HEK293T (cell line): ENCODE measurements at regions of chr22 and their contacts with region 1.

Region 1: GRCh38 chr22:37965940-37966664 is 12.6 kb downstream of the POLR2F start:
- DNase-seq: no peak

Region 2: GRCh38 chr22:37943136-37943824 is 22.8 kb before region 1 on chr22:
- CTCF ChIA-PET with region 1: interaction called, 11 read pairs
- POLR2A ChIA-PET with region 1: no interaction called
- DNase-seq: no peak

Region 3: DNA sequence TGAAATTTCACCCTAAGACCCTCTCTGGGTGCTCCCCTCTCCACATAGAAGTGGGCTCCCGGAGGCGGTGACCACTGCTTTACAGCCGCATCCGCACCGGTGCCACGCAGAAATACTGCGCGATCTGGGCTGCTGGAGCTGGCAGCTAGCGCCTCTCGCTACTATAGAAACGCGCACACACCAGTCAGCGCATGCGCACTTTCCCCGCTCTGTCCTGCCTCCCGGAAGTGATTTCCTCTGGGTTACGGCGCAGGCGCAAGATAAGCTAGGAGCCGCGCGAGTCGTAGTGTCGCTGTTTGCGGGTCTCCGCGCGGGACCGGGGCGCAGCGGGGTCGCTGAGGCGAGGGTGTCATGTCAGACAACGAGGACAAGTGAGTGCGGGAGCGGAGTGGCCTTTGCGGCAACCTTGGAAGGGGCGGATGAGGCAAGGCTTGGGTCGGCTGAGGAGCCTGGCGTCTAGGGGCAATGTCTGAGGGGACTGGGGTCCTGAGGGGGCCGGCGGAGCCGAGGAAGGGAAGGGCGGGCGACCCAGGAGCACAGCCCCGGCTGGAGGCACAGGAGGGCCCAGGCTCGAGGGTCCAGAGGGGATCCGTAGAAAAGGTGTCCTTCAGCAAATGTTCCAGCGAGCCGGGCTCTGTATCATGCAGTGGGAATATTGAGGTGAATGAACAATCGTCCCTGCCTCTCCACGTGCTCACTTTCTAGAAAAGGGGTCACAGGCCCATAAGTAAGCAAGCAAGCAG is 12.5 kb before region 1 on chr22 and contains the starts of genes C22orf23 and POLR2F:
- CTCF ChIA-PET with region 1: interaction called, 21 read pairs
- POLR2A ChIA-PET with region 1: interaction called, 15 read pairs
- DNase-seq: peak; percentile 100